Activated T-helper 1 cell treated with anti-CD3 and anti-CD28 coated beads, Interleukin-12 subunit alpha, Interleukin-12 subunit beta, Interleukin-2, Interleukin-4 antibody, amounts not matched to agents 30 ng/mL and 10 ng/mL and 1 ng/mL, durations not matched to agents 14 hours and 24 hours and 36 hours (primary cell): ENCODE measurements at regions of chr10 and their contacts with region 1.

Region 1: DNA sequence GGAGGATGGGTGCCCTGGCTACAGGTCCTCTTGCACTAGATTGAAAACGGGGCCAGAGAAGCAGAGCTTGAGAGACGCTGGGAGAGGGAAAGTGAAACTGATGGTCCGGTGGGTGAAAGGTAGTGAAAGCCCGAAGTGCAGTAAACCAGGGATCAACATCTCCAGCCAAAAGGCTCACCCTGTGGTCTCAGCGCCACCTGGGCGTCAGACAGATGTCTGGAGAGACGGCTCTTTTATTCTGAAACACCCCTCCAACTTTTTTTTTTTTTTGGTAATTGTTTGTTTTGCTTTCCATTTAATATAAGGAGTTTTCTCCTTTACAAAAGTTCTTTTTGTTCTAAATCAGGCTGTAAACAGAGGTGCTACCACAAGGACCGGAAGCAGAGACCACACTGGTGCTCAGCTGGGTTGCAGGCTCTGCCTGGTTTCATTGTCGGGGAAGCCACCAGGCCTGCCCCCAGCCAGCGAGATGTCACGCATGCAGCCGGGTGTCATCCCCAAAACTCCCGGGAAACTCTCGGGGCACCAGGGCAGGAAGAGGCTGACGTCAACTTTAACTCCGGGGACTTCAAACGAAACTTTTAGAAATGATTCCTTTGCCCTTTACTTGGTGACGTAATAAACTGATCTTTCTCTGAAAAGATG is 11.2 kb downstream of the IL2RA start:
- DNase-seq: peak; percentile 92
- H3K4me3 Mint-ChIP-seq: peak overlapping the region; percentile 82
- H3K27ac Mint-ChIP-seq: peak overlapping the region; percentile 91
- H3K4me1 Mint-ChIP-seq: peaks cover 89% of the 10 kb centered on the region
- H3K27me3 Mint-ChIP-seq: no peaks in the 10 kb centered on the region

Region 2: GRCh38 chr10:5889624-5890451 is 161.1 kb before region 1 on chr10 and contains the starts of genes ANKRD16 and FBH1:
- intact Hi-C with region 1: loop called (anchors 1 kb)
- DNase-seq: peak; percentile 99
- H3K4me3 Mint-ChIP-seq: peak within 1 kb of the TSS; percentile 91
- H3K27ac Mint-ChIP-seq: peak within 1 kb of the TSS; percentile 76
- H3K4me1 Mint-ChIP-seq: peaks cover 52% of the 10 kb centered on the region
- H3K27me3 Mint-ChIP-seq: no peaks in the 10 kb centered on the region
- total RNA-seq, gene ANKRD16: 11.3 and 12.4 TPM in 2 replicates
- total RNA-seq, gene FBH1: 66.9 and 70.6 TPM in 2 replicates

Region 3: DNA sequence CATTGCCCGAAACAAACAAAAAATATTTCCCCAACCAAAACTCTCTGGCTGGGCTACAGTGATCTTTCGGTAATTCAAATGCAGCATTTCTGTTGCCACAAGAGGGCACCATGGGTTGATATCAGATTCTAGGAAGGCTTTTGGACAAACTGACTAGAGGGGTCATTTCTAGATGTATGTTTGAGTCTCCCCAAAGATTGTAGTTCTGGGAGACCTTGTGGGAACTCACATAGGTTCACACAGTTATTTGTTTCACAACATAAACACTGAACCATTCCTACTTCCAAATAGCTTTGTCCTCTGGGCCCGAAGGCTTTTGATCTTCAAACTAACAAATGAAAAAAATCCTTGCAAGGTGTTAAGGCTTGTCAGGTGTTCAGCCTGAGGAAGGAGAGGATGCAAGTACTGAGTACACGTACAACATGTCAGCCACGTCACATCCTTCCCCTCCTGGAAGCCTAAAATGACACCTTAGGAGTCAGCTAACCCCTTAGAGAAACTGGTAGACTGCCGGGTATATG is 36.6 kb before region 1 on chr10:
- intact Hi-C with region 1: loop called (anchors 1 kb)
- DNase-seq: peak; percentile 30
- H3K4me3 Mint-ChIP-seq: peak overlapping the region; percentile 13
- H3K27ac Mint-ChIP-seq: peak overlapping the region; percentile 78
- H3K4me1 Mint-ChIP-seq: peaks cover 74% of the 10 kb centered on the region
- H3K27me3 Mint-ChIP-seq: no peaks in the 10 kb centered on the region

Region 4: DNA sequence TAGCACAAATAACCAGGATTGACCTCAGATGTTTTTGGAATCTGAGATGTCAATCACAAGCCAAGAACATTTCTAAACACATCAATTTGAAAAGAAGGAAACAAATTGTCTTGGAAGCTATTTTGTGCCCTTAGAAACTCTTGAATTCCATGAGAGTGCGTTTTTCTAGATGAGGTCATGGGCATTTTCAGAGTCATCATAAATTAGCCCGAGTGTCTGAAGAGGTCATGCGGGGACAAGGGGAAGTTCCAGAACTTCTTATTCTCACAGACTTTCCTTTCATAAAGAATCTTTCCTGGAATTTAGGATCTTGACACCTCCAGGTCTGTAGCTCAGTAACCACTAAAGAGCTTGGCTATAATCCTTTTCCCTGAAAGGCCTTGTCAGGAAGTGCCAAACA is 17.0 kb before region 1 on chr10:
- intact Hi-C with region 1: no loop called
- DNase-seq: no peak
- H3K4me3 Mint-ChIP-seq: no peak overlapping the region
- H3K27ac Mint-ChIP-seq: peak overlapping the region; percentile 53
- H3K4me1 Mint-ChIP-seq: peaks cover 79% of the 10 kb centered on the region
- H3K27me3 Mint-ChIP-seq: no peaks in the 10 kb centered on the region

Region 5: GRCh38 chr10:6072215-6072934 is 21.5 kb after region 1 on chr10:
- intact Hi-C with region 1: loop called (anchors 1 kb)
- DNase-seq: peak; percentile 29
- H3K4me3 Mint-ChIP-seq: peak overlapping the region; percentile 59
- H3K27ac Mint-ChIP-seq: peak overlapping the region; percentile 97
- H3K4me1 Mint-ChIP-seq: peaks cover 80% of the 10 kb centered on the region
- H3K27me3 Mint-ChIP-seq: no peaks in the 10 kb centered on the region

Region 6: GRCh38 chr10:6144406-6145165 is 93.7 kb after region 1 on chr10:
- intact Hi-C with region 1: loop called (anchors 5 kb)
- DNase-seq: peak; percentile 89
- H3K4me3 Mint-ChIP-seq: peak overlapping the region; percentile 85
- H3K27ac Mint-ChIP-seq: peak overlapping the region; percentile 86
- H3K4me1 Mint-ChIP-seq: peaks cover 82% of the 10 kb centered on the region
- H3K27me3 Mint-ChIP-seq: no peaks in the 10 kb centered on the region

Region 7: GRCh38 chr10:6498771-6499170 is 447.8 kb after region 1 on chr10:
- intact Hi-C with region 1: loop called (anchors 10 kb)
- DNase-seq: peak; percentile 63
- H3K4me3 Mint-ChIP-seq: peak overlapping the region; percentile 68
- H3K27ac Mint-ChIP-seq: peak overlapping the region; percentile 88
- H3K4me1 Mint-ChIP-seq: peaks cover 44% of the 10 kb centered on the region
- H3K27me3 Mint-ChIP-seq: no peaks in the 10 kb centered on the region